ENCODE measurements at regions of chr17 and their contacts with region 1.

Region 1: GRCh38 chr17:8991514-8992285 is 26.2 kb upstream of the PIK3R5 start:
- DNase-seq: peak; percentile 71
- H3K4me3 Mint-ChIP-seq: no peak overlapping the region
- H3K27ac Mint-ChIP-seq: no peak overlapping the region
- H3K4me1 Mint-ChIP-seq: no peaks in the 10 kb centered on the region
- H3K27me3 Mint-ChIP-seq: peaks cover 30% of the 10 kb centered on the region
- CTCF ChIP-seq: no peak

Region 2: GRCh38 chr17:9291912-9292560 is 300.3 kb after region 1 on chr17:
- CTCF ChIA-PET with region 1: no interaction called
- intact Hi-C with region 1: loop called (anchors 10 kb)
- DNase-seq: peak; percentile 27
- H3K4me3 Mint-ChIP-seq: no peak overlapping the region
- H3K27ac Mint-ChIP-seq: no peak overlapping the region
- H3K4me1 Mint-ChIP-seq: no peaks in the 10 kb centered on the region
- H3K27me3 Mint-ChIP-seq: no peaks in the 10 kb centered on the region
- CTCF ChIP-seq: peak; percentile 29

Region 3: GRCh38 chr17:9522074-9522473 is 530.4 kb after region 1 on chr17:
- CTCF ChIA-PET with region 1: no interaction called
- intact Hi-C with region 1: loop called (anchors 1 kb)
- DNase-seq: peak; percentile 19
- H3K4me3 Mint-ChIP-seq: no peak overlapping the region
- H3K27ac Mint-ChIP-seq: no peak overlapping the region
- H3K4me1 Mint-ChIP-seq: no peaks in the 10 kb centered on the region
- H3K27me3 Mint-ChIP-seq: no peaks in the 10 kb centered on the region
- CTCF ChIP-seq: peak; percentile 18